CD8-positive, alpha-beta T cell (primary cell): ENCODE measurements at regions of chr19 and their contacts with region 1.

Region 1: DNA sequence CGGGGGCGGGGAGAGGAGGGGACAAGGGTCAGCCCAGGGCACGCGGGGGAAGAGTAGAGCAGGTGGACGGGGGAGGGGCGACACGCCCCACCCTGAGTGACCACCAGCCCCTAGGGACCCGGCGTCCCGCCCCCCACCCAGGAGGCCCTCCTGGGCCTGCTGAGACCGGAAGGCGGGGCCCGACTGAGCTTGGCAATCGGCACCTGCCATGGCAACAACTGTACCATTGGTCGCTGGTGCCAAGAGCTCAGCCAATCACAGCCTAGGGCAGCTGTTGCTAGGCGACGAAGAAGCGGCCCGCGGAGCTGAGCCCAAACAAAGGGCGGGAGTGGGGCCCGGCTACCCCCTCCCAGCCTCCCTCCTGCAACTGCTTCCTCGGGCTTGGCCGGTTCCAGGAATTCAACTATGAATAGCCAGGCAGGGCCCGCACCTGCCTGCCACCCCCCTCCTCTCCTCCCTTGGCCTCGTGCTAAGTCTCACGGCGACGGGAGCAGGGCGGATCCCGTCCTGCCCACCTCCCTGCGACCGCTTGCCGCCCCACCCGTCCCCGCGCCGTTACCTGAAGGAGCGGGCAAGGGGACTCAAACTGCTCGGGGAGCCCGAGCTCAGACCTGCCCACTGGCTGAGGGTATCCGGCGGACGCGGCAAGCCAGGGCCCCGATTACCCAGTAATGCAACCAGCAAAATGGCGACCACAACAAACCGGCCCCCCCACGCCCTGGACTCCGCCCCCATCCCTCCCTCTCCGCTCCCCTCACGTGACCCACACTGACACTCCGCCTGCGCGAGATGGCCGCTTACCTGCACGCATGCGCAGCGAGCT is at the start of gene DYRK1B:
- DNase-seq: peak; percentile 97 to 99 (median 98)
- ATAC-seq: peak; percentile 84
- H3K4me3 ChIP-seq: peak within 1 kb of the TSS; percentile 93 to 99
- H3K4me3 Mint-ChIP-seq: peak within 1 kb of the TSS; percentile 75
- H3K27ac ChIP-seq: peak within 1 kb of the TSS; percentile 96 to 99
- H3K27ac Mint-ChIP-seq: peak within 1 kb of the TSS; percentile 90
- H3K4me1 ChIP-seq: peaks cover 23% of the 10 kb centered on the region
- H3K4me1 Mint-ChIP-seq: peaks cover 28% of the 10 kb centered on the region
- H3K27me3 ChIP-seq: no peaks in the 10 kb centered on the region
- H3K27me3 Mint-ChIP-seq: no peaks in the 10 kb centered on the region
- CTCF ChIP-seq: no peak
- total RNA-seq, gene DYRK1B: 19.0 to 22.6 TPM

Region 2: GRCh38 chr19:39858541-39858940 is 24.9 kb after region 1 on chr19:
- CTCF ChIA-PET with region 1: no interaction called
- POLR2A ChIA-PET with region 1: no interaction called
- intact Hi-C with region 1: loop called in 1 of 2 experiments (anchors 1 kb)
- DNase-seq: peak in 2 of 9 experiments; percentile 78 to 85
- ATAC-seq: peak; percentile 99
- H3K4me3 ChIP-seq: no peak overlapping the region
- H3K4me3 Mint-ChIP-seq: peak overlapping the region; percentile 61
- H3K27ac ChIP-seq: no peak overlapping the region
- H3K27ac Mint-ChIP-seq: peak overlapping the region; percentile 29
- H3K4me1 ChIP-seq: no peaks in the 10 kb centered on the region
- H3K4me1 Mint-ChIP-seq: peaks cover 9% of the 10 kb centered on the region
- H3K27me3 ChIP-seq: no peaks in the 10 kb centered on the region
- H3K27me3 Mint-ChIP-seq: peaks cover 2% of the 10 kb centered on the region
- CTCF ChIP-seq: no peak